Activated CD4-positive, alpha-beta T cell treated with anti-CD3 and anti-CD28 coated beads, Interleukin-2, amount 10 ng/mL, durations not matched to agents 24 days and 14 days (primary cell): ENCODE measurements at regions of chrX and their contacts with region 1.

Region 1: GRCh38 chrX:46545111-46546005 is at the start of gene ZNF674:
- DNase-seq: peak; percentile 98
- H3K4me3 Mint-ChIP-seq: peak within 1 kb of the TSS; percentile 95
- H3K27ac Mint-ChIP-seq: peak within 1 kb of the TSS; percentile 97
- H3K4me1 Mint-ChIP-seq: peaks cover 16% of the 10 kb centered on the region
- H3K27me3 Mint-ChIP-seq: no peaks in the 10 kb centered on the region
- total RNA-seq, gene ZNF674: 2.1 and 2.6 TPM in 2 replicates

Region 2: DNA sequence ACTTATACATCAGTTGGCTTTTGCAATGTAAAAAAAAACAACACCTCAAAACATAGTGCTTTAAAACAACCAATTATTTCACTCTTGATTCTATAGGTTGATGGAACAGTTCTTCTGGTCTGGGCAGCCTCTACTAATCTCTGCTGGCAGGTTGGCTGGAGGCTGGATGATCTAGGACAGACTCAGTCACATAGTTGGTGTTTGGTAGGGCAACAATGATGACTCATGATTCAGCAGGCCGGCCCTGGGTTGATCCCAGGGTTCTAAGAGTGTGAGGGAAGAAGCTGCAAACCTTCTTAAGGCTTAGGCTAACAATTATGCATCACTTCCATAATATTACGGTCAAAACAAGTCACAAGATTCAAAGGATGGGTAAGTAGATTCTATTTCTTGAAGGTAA is 558.4 kb before region 1 on chrX:
- intact Hi-C with region 1: no loop called
- DNase-seq: no peak
- H3K4me3 Mint-ChIP-seq: no peak overlapping the region
- H3K27ac Mint-ChIP-seq: no peak overlapping the region
- H3K4me1 Mint-ChIP-seq: no peaks in the 10 kb centered on the region
- H3K27me3 Mint-ChIP-seq: no peaks in the 10 kb centered on the region

Region 3: GRCh38 chrX:46446727-46447378 is 98.5 kb before region 1 on chrX:
- intact Hi-C with region 1: loop called (anchors 1 kb)
- DNase-seq: peak; percentile 95
- H3K4me3 Mint-ChIP-seq: peak overlapping the region; percentile 87
- H3K27ac Mint-ChIP-seq: peak overlapping the region; percentile 92
- H3K4me1 Mint-ChIP-seq: peaks cover 13% of the 10 kb centered on the region
- H3K27me3 Mint-ChIP-seq: no peaks in the 10 kb centered on the region

Region 4: DNA sequence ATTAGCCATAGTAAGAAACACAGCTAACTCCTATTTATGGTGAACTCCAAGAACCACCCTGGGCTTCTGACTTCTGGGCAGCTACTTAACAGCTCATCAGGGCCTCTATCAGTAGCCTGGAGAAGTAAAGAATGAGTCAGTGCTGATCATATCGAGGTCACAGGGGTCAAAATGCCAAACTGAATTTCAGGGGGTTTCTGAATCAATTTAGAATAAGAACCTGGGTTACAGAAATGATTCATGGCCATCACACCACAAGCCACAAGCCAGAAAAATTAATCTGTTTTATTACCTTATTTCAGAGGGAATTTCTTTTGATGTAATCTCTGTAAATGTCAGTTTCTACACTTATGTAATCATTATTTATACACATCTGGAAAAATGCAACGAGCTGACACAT is 92.6 kb after region 1 on chrX:
- intact Hi-C with region 1: loop called (anchors 5 kb)
- DNase-seq: no peak
- H3K4me3 Mint-ChIP-seq: no peak overlapping the region
- H3K27ac Mint-ChIP-seq: no peak overlapping the region
- H3K4me1 Mint-ChIP-seq: peaks cover 22% of the 10 kb centered on the region
- H3K27me3 Mint-ChIP-seq: no peaks in the 10 kb centered on the region